Endothelial cell of umbilical vein (primary cell): ENCODE measurements at regions of chr18 and their contacts with region 1.

Region 1: DNA sequence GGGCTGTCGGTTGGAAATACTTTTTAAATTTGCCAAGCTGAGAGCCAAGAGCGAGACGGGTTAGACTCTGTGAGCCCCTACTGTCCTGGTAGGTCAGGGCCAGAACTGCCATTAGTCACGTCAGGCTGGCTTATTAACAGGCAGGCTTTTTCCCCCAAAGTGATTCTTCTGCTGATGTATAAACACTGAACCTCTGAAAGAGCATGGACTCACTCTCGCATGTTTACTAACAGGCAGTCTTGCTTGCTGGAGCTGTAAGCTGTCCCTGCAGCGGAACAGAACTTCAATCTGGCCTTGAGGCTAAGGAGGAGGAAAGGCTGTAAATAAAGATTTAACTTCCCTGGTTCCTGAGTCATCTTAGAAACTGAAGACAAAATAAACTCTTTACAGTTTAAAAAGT is 288.4 kb downstream of the PIEZO2 start:
- DNase-seq: no peak
- H3K4me3 ChIP-seq: no peak overlapping the region
- H3K27ac ChIP-seq: no peak overlapping the region
- H3K4me1 ChIP-seq: peaks cover 29% of the 10 kb centered on the region
- H3K27me3 ChIP-seq: no peaks in the 10 kb centered on the region
- CTCF ChIP-seq: no peak
- POLR2A ChIP-seq: no peak

Region 2: GRCh38 chr18:9563331-9563730 is 1297.6 kb before region 1 on chr18:
- CTCF ChIA-PET with region 1: no interaction called
- POLR2A ChIA-PET with region 1: no interaction called
- dilution Hi-C with region 1: no loop called
- intact Hi-C with region 1: no loop called
- DNase-seq: no peak
- H3K4me3 ChIP-seq: no peak overlapping the region
- H3K27ac ChIP-seq: no peak overlapping the region
- H3K4me1 ChIP-seq: no peaks in the 10 kb centered on the region
- H3K27me3 ChIP-seq: no peaks in the 10 kb centered on the region
- CTCF ChIP-seq: no peak
- POLR2A ChIP-seq: no peak

Region 3: GRCh38 chr18:10787293-10787901 is 73.5 kb before region 1 on chr18:
- CTCF ChIA-PET with region 1: no interaction called
- POLR2A ChIA-PET with region 1: no interaction called
- dilution Hi-C with region 1: no loop called
- intact Hi-C with region 1: no loop called
- DNase-seq: peak; percentile 72
- H3K4me3 ChIP-seq: no peak overlapping the region
- H3K27ac ChIP-seq: no peak overlapping the region
- H3K4me1 ChIP-seq: no peaks in the 10 kb centered on the region
- H3K27me3 ChIP-seq: peaks cover 0 to 2% of the 10 kb centered on the region in 2 experiments
- CTCF ChIP-seq: peak; percentile 82 to 87
- POLR2A ChIP-seq: no peak

Region 4: GRCh38 chr18:10912790-10913545 is 52.0 kb after region 1 on chr18:
- CTCF ChIA-PET with region 1: no interaction called
- POLR2A ChIA-PET with region 1: no interaction called
- dilution Hi-C with region 1: no loop called
- intact Hi-C with region 1: loop called (anchors 5 kb)
- DNase-seq: peak; percentile 97
- H3K4me3 ChIP-seq: no peak overlapping the region
- H3K27ac ChIP-seq: peak overlapping the region; percentile 98
- H3K4me1 ChIP-seq: peaks cover 19% of the 10 kb centered on the region
- H3K27me3 ChIP-seq: no peaks in the 10 kb centered on the region
- CTCF ChIP-seq: no peak
- POLR2A ChIP-seq: no peak

Region 5: GRCh38 chr18:10979411-10979810 is 118.5 kb after region 1 on chr18:
- CTCF ChIA-PET with region 1: no interaction called
- POLR2A ChIA-PET with region 1: no interaction called
- dilution Hi-C with region 1: no loop called
- intact Hi-C with region 1: loop called (anchors 5 kb)
- DNase-seq: peak; percentile 38
- H3K4me3 ChIP-seq: peak overlapping the region in 1 of 3 experiments; percentile 55
- H3K27ac ChIP-seq: peak overlapping the region; percentile 2
- H3K4me1 ChIP-seq: peaks cover 29% of the 10 kb centered on the region
- H3K27me3 ChIP-seq: no peaks in the 10 kb centered on the region
- CTCF ChIP-seq: no peak
- POLR2A ChIP-seq: no peak